Cardiac septum (tissue), 1 donor: ENCODE measurements at regions of chr15 and their contacts with region 1.

Region 1: DNA sequence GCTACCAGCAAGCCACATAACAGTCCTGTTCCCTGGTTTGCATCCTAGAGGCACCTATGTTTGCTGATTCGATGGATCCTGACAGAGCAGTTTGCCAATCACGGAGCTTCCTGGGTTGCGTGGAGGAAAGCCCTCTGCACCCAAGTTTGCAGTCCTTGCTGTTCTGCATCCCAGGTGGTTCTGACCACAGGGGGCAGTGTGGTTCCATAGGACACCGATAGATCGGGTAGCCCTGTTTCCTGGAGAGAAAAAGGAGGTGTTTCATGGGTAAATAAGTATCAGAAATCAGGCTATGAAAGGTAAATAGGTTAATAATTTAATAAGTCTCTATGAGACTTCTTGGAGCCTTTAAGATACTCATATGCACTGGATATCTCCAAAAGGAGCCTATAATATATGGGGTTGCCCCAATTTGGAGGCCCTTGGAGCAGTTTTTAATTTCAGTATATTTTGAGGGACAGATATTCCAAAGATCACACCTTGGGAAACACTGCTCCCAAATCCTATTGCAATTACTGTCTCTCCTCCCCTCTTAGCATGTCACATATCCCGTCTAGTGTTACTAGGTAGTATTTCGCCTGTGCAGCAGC is 194.6 kb upstream of the TPM1 start:
- DNase-seq: no peak

Region 2: DNA sequence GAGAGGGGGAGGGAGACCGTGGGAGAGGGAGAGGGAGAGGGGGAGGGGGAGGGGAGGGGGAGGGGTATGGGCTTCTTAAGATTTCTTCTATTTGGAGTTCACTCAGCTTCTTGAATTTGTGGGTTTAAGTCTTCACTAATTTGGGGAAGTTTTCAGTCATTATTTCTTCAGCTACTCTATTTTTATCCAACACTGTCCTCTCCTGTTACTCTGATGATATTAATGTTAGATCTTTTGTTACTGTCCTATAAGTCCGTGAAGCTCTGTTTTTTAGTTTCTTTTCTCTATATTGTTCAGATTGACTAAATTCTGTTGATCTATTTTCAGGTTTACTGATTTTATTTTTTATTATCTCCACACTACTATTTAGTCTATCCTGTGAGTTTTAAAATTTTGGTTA is 157.0 kb before region 1 on chr15:
- intact Hi-C with region 1: no loop called
- DNase-seq: no peak

Region 3: DNA sequence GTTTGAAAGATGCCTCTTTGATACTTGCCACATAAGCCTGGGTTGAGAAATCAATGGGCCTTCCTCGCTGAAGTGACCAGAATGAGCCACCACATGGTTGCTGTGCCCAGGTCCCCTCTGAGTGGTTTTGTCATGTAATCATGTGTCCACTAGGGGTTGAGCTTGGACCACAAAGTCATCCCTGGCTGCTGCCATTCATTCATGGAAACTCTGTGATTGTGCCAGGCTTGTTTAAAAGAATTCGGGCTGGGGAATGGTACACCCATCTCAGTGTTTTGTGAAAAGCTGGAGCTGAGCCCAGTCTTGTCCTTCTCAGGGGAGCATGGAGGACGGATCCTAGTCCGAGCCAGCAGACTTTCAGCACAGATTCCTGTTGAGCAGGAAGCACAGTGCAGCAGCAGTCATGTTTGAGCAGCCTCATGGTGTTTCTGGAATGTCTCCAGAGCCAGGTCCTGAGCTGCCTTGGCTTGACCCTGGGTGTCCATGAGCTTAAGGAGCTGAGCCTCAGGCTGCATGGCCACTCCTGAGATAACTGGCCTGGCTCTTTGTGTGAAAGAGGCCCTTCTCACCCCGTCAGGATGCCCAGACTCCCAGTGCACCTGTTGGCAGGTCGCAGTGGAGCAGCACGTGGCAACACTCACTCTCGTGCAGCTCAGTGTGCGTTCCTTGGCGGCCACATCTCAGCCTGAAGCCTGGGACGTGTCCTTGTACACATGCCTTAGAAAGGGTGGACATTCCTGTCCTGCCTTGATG is 65.8 kb before region 1 on chr15:
- intact Hi-C with region 1: loop called (anchors 5 kb)
- DNase-seq: peak; percentile 80

Region 4: DNA sequence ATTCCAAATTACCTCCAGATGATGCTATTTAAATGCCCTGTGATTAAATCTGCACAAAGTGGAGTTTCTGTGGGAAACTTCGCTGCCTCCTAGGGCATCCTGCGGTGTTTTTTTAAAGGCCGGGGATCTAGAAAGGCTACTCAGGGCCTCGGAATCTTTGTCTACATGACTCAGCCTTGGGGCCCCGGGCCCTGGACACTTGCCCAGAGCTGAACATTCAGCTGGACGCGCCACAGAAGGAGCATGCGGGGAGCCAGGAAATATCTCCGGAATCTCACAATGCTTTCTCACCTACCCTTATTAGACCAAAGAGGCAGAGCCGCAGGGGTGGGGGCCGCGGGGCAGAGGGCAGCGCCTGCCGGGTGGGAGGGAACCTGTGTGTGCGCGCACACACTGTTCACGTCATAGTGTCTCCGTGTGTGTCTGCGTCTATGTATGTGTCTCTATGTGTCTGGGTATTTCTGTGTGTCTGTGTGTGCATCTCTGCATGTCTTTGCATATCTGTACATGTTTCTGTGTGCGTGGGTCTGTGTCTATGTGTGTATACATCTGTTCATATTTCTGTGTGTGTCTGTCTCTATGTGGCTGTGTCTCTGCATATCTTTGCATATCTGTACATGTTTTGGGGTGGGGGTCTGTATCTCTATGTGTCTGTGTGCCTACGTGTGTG is 49.1 kb after region 1 on chr15:
- intact Hi-C with region 1: loop called (anchors 5 kb)
- DNase-seq: peak; percentile 96

Region 5: DNA sequence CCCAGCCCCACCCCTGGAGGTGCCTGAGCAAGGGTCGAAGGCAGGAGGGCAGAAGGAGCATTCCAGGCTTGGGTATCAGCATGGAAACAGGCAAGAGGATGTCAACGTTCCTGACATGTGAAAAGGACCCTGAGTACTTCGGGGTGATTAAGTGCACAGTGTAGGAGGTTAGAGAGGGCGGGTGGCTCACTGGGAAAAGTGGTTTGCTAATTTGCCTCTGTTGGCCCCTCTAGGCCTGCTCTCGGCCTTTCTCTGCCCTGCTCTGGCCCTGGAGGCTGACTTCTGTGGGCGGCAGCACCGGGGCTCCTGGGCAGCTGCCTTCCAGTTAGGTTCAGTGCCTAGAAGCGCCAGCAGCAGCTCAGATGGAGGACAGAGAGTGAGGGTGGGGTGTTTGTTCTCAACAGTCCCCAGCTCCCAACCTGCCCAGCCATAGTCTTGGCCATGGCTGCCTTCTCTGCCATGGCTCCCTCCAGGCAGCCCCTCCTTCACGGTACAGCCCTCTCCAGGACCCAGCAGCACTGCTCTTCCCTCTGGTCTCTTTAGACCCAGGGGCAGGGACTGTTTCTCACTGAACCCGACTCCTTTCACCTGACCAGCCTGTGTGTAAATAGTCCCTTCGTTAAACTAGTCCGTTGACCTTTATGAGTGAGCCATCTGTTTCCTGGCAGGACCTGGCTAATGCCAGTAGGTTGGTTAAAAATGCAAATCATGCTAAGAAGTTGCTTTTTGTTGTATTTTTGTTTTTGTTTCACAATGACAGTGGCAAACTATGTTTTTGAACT is 87.5 kb after region 1 on chr15:
- intact Hi-C with region 1: loop called (anchors 10 kb)
- DNase-seq: no peak

Region 6: DNA sequence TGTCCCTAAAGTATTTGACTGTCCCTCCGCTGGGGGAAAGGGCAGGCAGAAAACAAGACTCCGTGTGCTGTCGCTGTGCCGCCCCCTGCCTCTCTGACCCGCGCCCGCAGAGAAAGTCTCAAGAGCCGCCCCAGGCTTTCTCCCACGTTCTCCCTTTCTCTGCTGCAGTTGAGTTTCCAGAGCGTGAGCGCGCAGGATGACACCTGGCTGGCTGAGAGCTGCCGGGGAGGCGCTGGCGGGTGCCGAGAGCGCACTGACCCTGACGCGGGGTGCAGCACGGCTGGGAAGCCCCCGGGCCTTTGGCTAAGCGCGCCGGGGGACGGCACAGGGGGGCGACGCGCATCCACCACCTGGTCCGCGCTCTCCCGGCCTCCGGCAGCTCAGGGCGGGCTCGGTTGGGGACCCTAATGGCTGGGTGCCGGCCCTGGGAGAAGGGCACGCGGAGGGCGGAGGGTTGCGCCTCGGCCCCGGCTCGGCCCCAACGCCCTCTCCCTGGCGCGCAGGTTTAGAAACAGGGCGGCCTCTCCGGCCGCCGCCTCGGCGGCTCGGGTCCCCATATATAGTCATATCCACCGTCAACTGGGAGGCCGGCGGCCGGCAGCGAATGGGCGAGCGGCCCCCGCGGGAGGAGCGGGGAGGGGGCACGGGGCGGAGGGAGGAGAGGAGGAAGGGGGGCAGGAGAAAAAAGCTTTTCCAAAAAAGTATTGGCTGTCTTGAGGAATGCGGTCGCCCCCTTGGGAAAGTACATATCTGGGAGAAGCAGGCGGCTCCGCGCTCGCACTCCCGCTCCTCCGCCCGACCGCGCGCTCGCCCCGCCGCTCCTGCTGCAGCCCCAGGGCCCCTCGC is 194.2 kb after region 1 on chr15 and contains the start of gene TPM1:
- intact Hi-C with region 1: loop called (anchors 2 kb)
- DNase-seq: peak; percentile 93
- total RNA-seq, gene TPM1: 14,297 TPM

Region 7: GRCh38 chr15:63093486-63094205 is 245.7 kb after region 1 on chr15:
- intact Hi-C with region 1: loop called (anchors 5 kb)
- DNase-seq: peak; percentile 86